Right ventricle myocardium superior (tissue), 1 donor: ENCODE measurements at regions of chr4 and their contacts with region 1.

Region 1: GRCh38 chr4:38902695-38903094 is 35.1 kb downstream of the FAM114A1 start:
- DNase-seq: no peak
- ATAC-seq: peak; percentile 69

Region 2: DNA sequence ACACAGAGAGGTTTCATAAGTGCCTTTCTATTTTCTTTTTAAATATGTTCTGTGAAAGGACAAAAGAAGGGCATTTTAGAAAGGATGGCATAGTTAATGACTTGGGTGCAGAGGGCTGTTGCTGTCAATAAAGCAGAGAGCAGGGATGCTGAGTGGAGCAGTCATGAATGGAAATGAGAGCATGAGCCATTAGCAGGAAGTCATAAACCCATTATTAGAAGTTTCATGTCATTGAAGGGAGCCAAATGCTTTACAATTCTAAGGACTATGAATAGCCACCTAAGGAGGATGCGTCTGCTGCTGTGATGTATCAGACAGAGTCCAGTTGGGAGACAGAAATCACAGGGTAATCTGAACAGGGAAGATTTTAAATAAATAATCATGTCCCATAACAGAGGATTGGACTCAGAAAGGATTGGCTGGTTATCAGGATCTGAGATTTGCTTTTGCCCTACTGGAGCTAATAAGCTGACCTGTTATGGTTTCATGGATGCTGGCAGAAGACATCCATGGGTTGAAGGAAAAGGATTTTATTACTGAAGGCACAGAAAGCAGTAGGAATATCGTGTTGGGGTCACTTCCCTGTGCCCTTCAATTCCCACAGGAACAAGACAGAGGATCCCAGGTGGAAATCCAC is 232.1 kb after region 1 on chr4:
- intact Hi-C with region 1: loop called (anchors 2 kb)
- DNase-seq: no peak
- ATAC-seq: peak; percentile 18